ENCODE measurements at regions of chr5 and their contacts with region 1.

Region 1: DNA sequence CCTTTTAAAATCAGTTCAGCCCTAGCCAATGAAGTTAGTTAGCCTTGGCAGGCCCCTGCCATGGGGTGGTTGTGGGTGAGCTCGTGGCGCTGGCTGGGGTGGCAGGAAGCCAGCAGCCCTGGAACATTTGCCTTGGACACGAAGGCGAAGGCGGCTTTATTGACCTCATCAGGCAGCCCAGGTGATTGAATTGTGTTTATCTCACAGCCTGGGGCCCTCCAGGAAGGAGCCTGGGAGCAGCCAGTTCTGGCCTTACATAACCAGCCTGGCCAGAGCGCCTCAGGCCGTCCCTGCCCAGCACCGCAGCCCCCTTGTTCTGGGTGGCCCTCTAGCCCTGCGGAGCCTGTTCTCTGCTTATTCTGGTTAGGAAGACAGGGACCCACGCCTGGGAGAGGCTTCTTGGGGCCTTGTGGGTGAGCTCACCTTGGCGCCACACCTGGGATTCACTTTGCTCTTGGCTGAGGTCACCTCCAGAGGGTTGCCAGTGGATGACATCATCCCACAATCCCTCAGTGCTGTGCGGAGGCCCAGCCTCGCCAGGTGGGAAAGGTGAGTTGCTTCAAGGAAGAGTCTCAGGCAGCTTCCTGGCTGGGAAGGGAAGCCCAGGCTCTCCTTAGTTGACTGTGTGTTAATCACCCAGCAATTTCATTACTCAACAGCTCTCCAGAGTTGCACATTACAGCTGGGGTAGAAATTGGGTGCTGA is 54.4 kb upstream of the RPL26L1 start:
- DNase-seq: peak; percentile 100
- H3K4me3 ChIP-seq: no peak overlapping the region
- H3K27ac ChIP-seq: peak overlapping the region; percentile 97
- H3K4me1 ChIP-seq: peaks cover 31% of the 10 kb centered on the region
- H3K27me3 ChIP-seq: no peaks in the 10 kb centered on the region
- CTCF ChIP-seq: no peak

Region 2: DNA sequence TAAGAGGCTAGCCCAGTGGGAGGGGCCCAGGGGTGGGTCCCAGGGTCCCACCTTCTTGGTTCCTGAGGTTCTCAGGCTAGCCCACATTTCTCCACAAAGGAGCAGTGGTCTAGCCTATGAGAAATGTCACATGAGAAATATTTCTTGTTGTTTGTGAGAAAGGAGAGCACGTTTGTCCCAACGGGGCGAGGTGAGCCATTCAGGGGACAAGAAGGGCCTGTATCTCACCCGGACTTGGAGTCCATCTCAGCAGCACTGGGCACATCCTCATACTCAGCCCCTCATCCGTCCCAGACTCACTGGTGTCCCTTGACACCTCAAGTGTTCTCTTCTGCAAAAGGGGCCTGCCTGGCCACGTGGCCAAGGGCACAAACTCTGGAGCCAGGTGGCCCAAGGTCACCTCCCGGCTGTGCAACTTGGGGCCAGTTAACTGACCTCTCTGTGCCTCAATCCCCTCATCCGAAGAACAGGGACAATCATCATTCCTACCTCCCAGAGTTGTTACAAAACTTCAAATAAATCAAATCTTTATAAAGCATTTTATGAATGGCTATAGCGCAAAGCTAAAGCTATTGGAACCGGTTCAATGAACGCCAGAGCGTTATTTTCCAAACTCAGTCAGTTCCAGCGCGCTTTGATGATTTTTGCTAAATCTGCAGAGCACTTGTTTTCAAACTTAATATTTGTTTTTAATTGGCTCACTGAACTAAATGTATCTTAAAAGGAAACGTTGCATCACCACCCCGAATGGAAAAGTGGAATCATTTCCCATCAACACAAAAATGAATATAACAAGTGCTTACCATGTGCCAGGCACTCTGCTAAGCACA is 183.3 kb before region 1 on chr5:
- CTCF ChIA-PET with region 1: no interaction called
- dilution Hi-C with region 1: loop called (anchors 5 kb)
- in situ Hi-C with region 1: no loop called
- intact Hi-C with region 1: no loop called
- DNase-seq: no peak
- H3K4me3 ChIP-seq: no peak overlapping the region
- H3K27ac ChIP-seq: no peak overlapping the region
- H3K4me1 ChIP-seq: no peaks in the 10 kb centered on the region
- H3K27me3 ChIP-seq: no peaks in the 10 kb centered on the region
- CTCF ChIP-seq: no peak

Region 3: GRCh38 chr5:172764849-172765765 is 139.7 kb before region 1 on chr5:
- CTCF ChIA-PET with region 1: no interaction called
- dilution Hi-C with region 1: no loop called
- in situ Hi-C with region 1: no loop called
- intact Hi-C with region 1: loop called (anchors 1 kb)
- DNase-seq: peak; percentile 99
- H3K4me3 ChIP-seq: peak overlapping the region; percentile 16 to 52 (median 38)
- H3K27ac ChIP-seq: peak overlapping the region; percentile 95
- H3K4me1 ChIP-seq: peaks cover 42% of the 10 kb centered on the region
- H3K27me3 ChIP-seq: no peaks in the 10 kb centered on the region
- CTCF ChIP-seq: no peak

Region 4: DNA sequence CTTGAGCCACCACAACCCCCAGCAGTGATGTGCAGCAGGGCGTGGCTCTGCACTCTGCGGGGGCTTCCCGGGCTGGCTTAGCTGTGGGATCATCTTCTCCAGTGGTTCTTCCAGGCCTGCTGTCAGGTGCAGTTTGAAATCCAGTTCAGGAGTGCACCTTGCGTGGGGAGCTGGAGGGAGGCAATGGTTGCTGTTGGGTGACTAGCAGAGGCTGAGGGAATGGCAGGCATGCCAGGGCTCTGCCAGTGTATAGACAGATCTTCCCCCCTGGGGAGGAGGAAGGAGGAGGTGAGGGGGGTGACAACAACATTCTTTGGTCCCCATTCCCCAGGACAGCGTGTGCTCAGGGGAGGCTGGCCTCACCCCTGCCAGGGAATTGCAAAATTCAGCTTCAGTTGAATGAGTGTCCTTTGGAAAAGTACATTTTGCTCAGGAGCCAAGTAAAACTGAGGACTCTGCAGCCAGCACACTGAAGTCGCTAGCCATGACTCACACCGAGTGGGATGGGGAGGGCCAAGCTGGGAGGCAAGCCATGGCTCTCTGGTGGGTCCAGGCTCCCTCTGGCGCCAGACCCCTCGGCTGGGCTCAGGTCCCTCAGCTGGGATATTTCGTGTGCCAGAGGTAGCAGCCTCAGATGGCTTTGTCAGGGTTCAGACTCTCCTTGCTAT is 35.7 kb before region 1 on chr5:
- CTCF ChIA-PET with region 1: no interaction called
- dilution Hi-C with region 1: no loop called
- in situ Hi-C with region 1: no loop called
- intact Hi-C with region 1: loop called (anchors 2 kb)
- DNase-seq: peak; percentile 76
- H3K4me3 ChIP-seq: no peak overlapping the region
- H3K27ac ChIP-seq: peak overlapping the region; percentile 86
- H3K4me1 ChIP-seq: peaks cover 58% of the 10 kb centered on the region
- H3K27me3 ChIP-seq: no peaks in the 10 kb centered on the region
- CTCF ChIP-seq: peak in 1 of 2 donors; percentile 35

Region 5: DNA sequence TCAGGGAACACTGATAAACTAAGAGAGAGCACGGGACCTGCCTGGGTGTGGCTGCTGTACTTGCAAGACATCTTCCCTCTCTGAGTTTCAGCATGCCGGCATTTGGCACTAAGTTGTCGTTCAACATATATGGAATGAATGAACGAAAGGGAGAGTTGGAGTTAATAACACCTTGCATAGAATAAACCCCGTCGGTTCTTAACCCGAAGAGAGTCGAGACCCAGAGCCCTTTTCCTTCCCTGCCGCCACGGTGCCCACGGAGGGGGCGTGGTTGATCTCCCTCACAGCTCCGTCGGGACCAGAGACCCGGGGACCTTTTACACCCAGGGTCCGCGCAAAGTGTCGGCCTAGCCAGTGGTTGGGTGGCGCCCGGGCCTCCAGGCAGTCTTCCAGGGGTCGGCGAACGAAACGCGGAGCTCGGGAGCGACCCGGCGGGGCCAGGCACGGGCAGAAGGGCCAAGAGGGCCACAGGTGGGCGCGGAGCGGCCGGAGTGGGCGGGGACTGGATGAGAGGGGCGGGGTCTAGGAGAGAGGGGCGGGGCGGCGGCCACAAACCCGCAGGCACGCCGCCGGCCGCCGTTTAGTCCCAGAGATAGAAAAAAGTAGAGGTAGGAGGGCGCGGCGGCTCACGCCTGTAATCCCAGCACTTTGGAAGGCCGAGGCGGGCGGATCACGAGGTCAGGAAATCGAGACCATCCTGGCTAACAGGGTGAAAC is 53.7 kb after region 1 on chr5:
- CTCF ChIA-PET with region 1: no interaction called
- dilution Hi-C with region 1: no loop called
- in situ Hi-C with region 1: no loop called
- intact Hi-C with region 1: loop called (anchors 2 kb)
- DNase-seq: peak; percentile 37
- H3K4me3 ChIP-seq: peak overlapping the region; percentile 75 to 100 (median 98)
- H3K27ac ChIP-seq: peak overlapping the region; percentile 86
- H3K4me1 ChIP-seq: peaks cover 22% of the 10 kb centered on the region
- H3K27me3 ChIP-seq: no peaks in the 10 kb centered on the region
- CTCF ChIP-seq: no peak

Region 6: GRCh38 chr5:173412566-173412965 is 507.8 kb after region 1 on chr5:
- CTCF ChIA-PET with region 1: no interaction called
- dilution Hi-C with region 1: no loop called
- in situ Hi-C with region 1: no loop called
- intact Hi-C with region 1: no loop called
- DNase-seq: no peak
- H3K4me3 ChIP-seq: no peak overlapping the region
- H3K27ac ChIP-seq: no peak overlapping the region
- H3K4me1 ChIP-seq: no peaks in the 10 kb centered on the region
- H3K27me3 ChIP-seq: no peaks in the 10 kb centered on the region
- CTCF ChIP-seq: no peak

Region 7: GRCh38 chr5:173772384-173773059 is 867.7 kb after region 1 on chr5:
- CTCF ChIA-PET with region 1: no interaction called
- dilution Hi-C with region 1: no loop called
- in situ Hi-C with region 1: no loop called
- intact Hi-C with region 1: no loop called
- DNase-seq: no peak
- H3K4me3 ChIP-seq: no peak overlapping the region
- H3K27ac ChIP-seq: no peak overlapping the region
- H3K4me1 ChIP-seq: no peaks in the 10 kb centered on the region
- H3K27me3 ChIP-seq: no peaks in the 10 kb centered on the region
- CTCF ChIP-seq: no peak